ENCODE measurements at regions of chr2 and their contacts with region 1.

Region 1: DNA sequence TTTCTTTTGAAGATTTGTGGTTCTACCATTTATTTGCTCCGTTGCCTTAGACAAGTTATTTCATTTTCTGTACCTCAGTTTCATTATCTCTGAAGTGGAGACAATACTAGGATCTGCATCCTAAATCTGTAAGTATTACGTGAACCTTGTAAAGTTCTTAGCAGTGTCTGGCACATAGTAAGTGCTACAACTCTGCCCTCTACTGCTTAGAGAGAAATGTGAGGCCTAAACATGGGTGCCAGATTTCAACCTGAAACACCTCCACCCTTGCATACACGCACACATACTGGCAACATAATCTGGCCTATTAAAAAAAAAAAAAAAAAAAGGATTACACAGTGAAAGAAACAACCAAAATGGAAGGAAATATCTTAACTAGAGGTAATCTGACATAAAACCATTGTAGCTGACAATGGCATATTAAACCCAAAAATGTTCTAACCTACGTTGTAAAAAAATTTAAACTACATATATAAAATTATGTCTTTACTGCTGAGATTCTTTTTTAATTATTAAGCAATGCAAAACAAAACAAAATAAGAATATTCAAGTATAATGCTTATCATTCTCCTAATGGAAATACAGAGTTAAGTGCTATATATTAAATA is 132.6 kb downstream of the MAP2 start:
- DNase-seq: peak in 1 of 6 donors; percentile 18
- ATAC-seq: peak; percentile 53 to 93 (median 86)
- H3K4me3 ChIP-seq: no peak overlapping the region
- H3K27ac ChIP-seq: no peak overlapping the region
- H3K4me1 ChIP-seq: no peaks in the 10 kb centered on the region
- H3K27me3 ChIP-seq: no peaks in the 10 kb centered on the region
- CTCF ChIP-seq: peak in 1 of 4 donors; percentile 23

Region 2: DNA sequence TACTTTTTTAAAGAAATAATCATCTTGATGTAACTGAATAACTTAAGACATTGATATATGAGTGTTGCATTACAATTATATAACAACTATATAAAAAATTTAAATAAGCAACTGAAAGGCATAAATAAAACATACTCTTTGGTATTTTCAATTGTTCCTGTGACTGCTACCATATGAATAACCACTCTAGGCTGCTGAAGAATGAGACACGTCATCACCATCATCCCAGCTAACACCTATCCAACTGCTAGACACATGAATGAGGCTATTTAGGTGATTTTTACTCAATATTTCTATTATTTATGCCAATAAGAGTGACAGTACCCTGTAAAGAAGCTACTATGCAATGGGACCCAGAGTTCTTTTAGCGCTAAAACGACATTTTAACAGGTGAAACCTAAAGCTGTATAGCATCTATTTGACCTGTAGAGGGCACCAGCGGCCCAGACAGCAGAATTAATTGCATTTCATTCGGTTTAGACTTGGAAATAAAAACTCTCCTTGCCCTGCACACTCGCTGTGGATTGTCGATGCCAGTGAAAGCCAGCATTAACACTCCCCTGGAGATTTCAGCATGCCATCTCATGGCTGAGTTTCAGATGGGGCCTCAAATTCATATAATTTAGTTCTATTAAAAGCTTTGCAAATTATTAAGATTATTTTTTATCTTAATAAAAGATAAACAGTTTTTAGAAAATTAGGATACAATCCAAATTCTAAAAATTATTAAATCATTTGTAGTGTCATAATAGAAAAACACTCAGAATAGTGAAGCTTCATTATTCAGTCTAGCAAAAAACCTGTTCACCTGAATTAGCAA is 222.1 kb before region 1 on chr2:
- intact Hi-C with region 1: loop called in 1 of 3 experiments (anchors 10 kb)
- DNase-seq: peak; percentile 31 to 71 (median 44)
- ATAC-seq: peak; percentile 82 to 98 (median 94)
- H3K4me3 ChIP-seq: no peak overlapping the region
- H3K27ac ChIP-seq: no peak overlapping the region
- H3K4me1 ChIP-seq: peaks cover 0 to 13% (median 8%) of the 10 kb centered on the region in 3 donors
- H3K27me3 ChIP-seq: no peaks in the 10 kb centered on the region
- CTCF ChIP-seq: peak; percentile 74 to 90 (median 85)

Region 3: DNA sequence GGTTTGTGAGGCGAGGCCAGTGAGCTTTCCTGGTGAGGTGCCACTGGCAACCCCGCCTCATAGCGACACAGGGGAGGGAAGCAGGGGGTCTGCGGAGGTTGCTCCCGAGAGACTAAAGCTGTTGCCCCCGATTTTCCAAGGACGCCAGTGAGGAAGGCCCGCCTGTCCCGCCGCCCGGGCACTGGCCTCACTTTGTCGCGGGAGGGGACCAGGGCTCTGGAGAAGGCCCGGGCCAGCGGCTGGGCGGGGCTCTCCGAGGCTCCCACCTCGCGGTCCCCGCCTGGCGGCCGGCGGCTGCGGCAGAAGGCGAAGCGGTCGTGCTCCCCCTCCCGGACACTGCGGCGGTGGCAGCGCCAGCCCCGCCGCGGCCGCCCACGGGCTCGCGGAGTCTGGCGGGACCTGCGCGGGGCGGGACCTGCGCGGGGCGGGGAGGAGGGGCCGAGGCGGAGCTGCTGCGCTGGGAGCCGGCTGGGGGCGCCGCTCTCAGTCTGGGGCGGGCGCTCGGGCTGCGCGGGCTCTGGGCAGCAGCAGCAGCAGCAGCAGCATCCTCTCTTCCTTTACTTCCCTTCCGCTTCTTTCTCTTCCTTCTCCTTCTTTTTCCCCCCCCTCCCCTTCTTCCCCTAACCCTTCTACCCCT is 132.8 kb before region 1 on chr2 and contains the start of gene MAP2:
- intact Hi-C with region 1: loop called in 2 of 3 experiments (anchors 10 kb)
- DNase-seq: peak; percentile 85 to 96 (median 92)
- ATAC-seq: peak; percentile 92 to 97 (median 96)
- H3K4me3 ChIP-seq: peak within 1 kb of the TSS; percentile 55 to 72 (median 58)
- H3K27ac ChIP-seq: peak within 1 kb of the TSS in 3 of 4 donors; percentile 39 to 69 (median 68)
- H3K4me1 ChIP-seq: peaks cover 0 to 5% (median 4%) of the 10 kb centered on the region in 3 donors
- H3K27me3 ChIP-seq: no peaks in the 10 kb centered on the region
- CTCF ChIP-seq: peak; percentile 86 to 95 (median 93)
- total RNA-seq, gene MAP2: 9.2 to 23.9 (median 12.2) TPM

Region 4: GRCh38 chr2:209473930-209474419 is 82.5 kb before region 1 on chr2:
- intact Hi-C with region 1: no loop called
- DNase-seq: no peak
- ATAC-seq: peak in 3 of 4 donors; percentile 45 to 74 (median 63)
- H3K4me3 ChIP-seq: no peak overlapping the region
- H3K27ac ChIP-seq: no peak overlapping the region
- H3K4me1 ChIP-seq: peaks cover 0 to 12% (median 0%) of the 10 kb centered on the region in 3 donors
- H3K27me3 ChIP-seq: no peaks in the 10 kb centered on the region
- CTCF ChIP-seq: no peak

Measured in pancreas (tissue), 10 donors.